Psoas muscle (tissue), 8 donors: ENCODE measurements at regions of chr9 and their contacts with region 1.

Region 1: DNA sequence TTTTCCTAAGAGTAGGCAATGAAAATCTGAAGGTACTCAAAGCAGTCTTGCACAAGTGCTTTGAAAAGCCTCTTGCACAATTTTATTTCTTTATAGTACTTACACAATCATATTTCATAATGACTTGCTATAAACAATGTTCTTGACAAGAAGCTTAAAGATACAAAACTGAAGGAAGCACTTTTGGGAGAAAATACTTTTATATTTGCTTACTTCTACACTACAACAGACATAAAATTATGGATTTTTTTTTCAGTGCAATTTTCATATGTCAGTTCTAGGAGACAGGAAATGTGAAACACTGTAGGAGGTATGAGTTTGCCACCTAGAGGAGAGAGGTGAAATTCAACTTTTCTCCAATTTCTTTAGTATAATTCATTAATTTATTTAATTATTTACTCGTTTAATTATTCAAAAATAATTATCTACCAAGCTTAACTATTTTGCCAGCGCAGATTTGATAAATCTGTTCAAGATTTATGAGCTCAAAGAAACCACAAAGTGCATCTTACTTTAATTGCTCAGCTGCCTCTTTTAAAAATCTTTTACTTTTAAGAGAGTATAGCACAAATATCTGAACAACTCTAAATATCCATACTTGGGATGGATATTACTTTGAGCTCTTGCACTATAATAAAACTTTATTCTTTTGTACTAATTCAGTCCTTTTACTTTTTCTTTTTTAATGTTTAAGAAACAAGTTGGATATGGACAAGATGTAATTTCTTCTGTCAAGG is 29.0 kb upstream of the CDKN2B start:
- DNase-seq: no peak
- ATAC-seq: peak; percentile 58 to 82 (median 68)
- H3K4me3 ChIP-seq: no peak overlapping the region
- H3K27ac ChIP-seq: peak overlapping the region; percentile 75
- H3K4me1 ChIP-seq: peaks cover 36% of the 10 kb centered on the region
- H3K27me3 ChIP-seq: no peaks in the 10 kb centered on the region
- CTCF ChIP-seq: peak; percentile 68

Region 2: DNA sequence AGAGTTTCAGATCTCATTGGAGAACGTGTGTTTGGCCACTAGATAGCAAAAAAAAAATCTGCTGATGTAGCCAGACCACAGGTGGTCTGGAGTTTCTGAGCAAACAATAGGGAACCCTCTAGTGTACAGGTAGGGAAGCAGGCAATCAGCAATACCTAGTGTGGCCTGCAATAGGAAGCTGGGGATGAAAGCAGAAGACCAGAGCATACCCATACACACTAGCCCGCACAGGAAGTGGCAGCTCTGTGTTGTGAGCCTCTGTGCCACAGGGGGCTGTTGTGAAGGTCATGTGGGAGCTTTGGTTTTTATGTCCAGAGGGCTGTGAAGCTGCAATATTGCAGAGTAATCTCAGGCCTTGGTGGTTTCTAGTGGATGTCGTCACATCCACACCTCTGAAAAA is 154.5 kb before region 1 on chr9:
- intact Hi-C with region 1: no loop called
- DNase-seq: no peak
- ATAC-seq: no peak
- H3K4me3 ChIP-seq: no peak overlapping the region
- H3K27ac ChIP-seq: no peak overlapping the region
- H3K4me1 ChIP-seq: no peaks in the 10 kb centered on the region
- H3K27me3 ChIP-seq: no peaks in the 10 kb centered on the region
- CTCF ChIP-seq: no peak

Region 3: GRCh38 chr9:21995177-21996086 is 42.7 kb before region 1 on chr9:
- intact Hi-C with region 1: no loop called
- DNase-seq: peak; percentile 74 to 84
- ATAC-seq: peak; percentile 65 to 86 (median 74)
- H3K4me3 ChIP-seq: peak overlapping the region; percentile 98
- H3K27ac ChIP-seq: peak overlapping the region; percentile 60
- H3K4me1 ChIP-seq: peaks cover 5% of the 10 kb centered on the region
- H3K27me3 ChIP-seq: peaks cover 0 to 21% (median 7%) of the 10 kb centered on the region in 3 donors
- CTCF ChIP-seq: no peak

Region 4: GRCh38 chr9:22008736-22009562 is 29.2 kb before region 1 on chr9 and contains the start of gene CDKN2B:
- intact Hi-C with region 1: loop called in 1 of 2 experiments (anchors 2 kb)
- DNase-seq: peak; percentile 97 to 98
- ATAC-seq: peak; percentile 96 to 97 (median 97)
- H3K4me3 ChIP-seq: peak within 1 kb of the TSS; percentile 88
- H3K27ac ChIP-seq: peak within 1 kb of the TSS; percentile 92
- H3K4me1 ChIP-seq: peaks cover 22% of the 10 kb centered on the region
- H3K27me3 ChIP-seq: peaks cover 0 to 2% (median 0%) of the 10 kb centered on the region in 3 donors
- CTCF ChIP-seq: peak; percentile 98
- total RNA-seq, gene CDKN2B: 5.4 to 12.3 (median 8.3) TPM

Region 5: DNA sequence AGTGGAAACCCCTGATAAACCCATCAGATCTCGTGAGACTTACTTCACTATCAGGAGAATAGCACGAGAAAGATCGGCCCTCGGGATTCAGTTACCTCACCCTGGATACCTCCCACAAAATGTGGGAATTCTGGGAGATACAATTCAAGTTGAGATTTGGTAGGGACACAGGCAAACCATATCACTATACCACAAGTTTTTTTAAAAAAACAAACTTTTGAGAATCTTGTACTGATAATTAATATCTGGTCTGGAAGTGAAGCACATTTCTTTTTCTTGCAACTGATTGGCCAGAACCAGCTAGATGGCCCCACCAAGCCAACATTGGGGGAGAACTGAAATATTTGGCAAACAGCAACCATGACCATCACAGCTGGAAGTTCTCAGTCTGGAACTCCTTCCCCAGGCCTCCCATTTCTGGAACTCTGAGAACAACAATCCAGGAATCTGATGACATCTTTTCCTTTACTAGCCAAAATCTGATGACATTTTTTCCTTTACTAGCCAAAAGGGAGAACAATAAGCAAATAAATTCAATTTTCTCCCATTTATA is 22.8 kb after region 1 on chr9:
- intact Hi-C with region 1: no loop called
- DNase-seq: no peak
- ATAC-seq: peak in 1 of 4 donors; percentile 54
- H3K4me3 ChIP-seq: no peak overlapping the region
- H3K27ac ChIP-seq: no peak overlapping the region
- H3K4me1 ChIP-seq: peaks cover 7% of the 10 kb centered on the region
- H3K27me3 ChIP-seq: no peaks in the 10 kb centered on the region
- CTCF ChIP-seq: no peak

Region 6: DNA sequence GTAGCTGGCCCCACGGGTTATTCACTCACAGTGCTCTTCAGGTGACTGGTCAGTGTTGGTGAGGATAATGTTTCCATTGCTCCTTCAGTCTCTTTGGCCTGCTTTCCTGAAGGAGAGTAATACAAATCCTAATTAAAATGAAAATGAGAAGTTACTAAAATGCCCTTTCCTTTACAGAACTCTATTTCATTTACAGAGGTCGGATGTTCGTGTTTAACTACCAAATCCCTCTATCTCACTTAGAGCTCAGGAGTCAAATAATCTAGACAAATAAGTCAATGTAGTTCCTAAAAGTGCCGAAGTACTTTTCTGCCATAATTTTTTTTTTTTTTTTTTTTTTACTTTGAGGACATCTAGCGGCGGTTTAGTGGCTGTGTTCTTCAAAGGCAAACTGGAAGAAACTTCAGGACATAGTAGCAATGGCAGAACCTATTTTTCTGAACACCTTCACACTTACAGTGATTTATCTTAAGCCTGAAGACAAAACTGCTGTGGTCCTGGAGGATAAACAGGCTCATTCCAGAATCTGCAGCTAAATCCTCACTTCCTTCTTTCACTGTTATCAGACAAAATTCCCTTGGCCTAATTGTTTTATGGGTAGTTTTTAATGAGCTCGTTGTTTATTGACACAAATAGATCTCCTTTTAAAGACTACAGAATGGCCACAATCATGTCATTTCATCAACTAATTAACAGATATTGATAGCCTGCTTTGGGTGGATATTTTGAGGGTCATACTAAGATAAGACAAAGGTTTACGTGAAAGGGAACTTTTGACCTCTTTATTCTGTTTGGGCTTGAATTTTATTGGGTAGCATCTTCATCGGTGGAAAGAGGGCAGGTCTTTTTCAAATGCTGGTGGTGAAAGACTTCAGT is 200.9 kb after region 1 on chr9:
- intact Hi-C with region 1: loop called in 1 of 2 experiments (anchors 10 kb)
- DNase-seq: no peak
- ATAC-seq: peak in 1 of 4 donors; percentile 63
- H3K4me3 ChIP-seq: no peak overlapping the region
- H3K27ac ChIP-seq: no peak overlapping the region
- H3K4me1 ChIP-seq: no peaks in the 10 kb centered on the region
- H3K27me3 ChIP-seq: no peaks in the 10 kb centered on the region
- CTCF ChIP-seq: peak; percentile 52